ENCODE measurements at regions of chr6 and their contacts with region 1.

Region 1: DNA sequence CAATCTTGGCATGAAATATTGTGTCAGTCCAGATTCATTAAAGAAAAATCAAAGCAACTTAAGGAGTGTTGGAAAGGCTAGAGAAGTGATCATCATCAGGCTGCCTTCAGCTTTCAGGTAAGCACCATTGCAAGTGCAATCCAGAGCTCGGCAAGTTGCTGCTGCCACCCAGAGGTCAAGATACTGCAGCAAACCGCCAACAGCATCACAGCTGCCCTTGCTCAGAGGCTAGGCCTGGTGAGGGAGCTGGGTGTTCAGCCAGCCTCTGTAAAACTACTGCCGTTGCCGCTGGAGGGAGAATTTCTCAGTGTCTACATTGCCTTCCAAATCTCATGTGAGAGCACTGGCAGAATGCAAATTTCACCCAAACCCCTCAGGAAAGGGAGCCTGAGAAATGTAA is 5.8 kb upstream of the SYNE1 start:
- DNase-seq: peak; percentile 51 to 73
- ATAC-seq: peak; percentile 87 to 96 (median 92)
- H3K4me3 ChIP-seq: no peak overlapping the region
- H3K27ac ChIP-seq: no peak overlapping the region
- H3K4me1 ChIP-seq: peaks cover 0 to 2% (median 0%) of the 10 kb centered on the region in 9 donors
- H3K27me3 ChIP-seq: peaks cover 0 to 3% (median 0%) of the 10 kb centered on the region in 7 donors
- CTCF ChIP-seq: peak; percentile 36 to 84 (median 66)

Region 2: DNA sequence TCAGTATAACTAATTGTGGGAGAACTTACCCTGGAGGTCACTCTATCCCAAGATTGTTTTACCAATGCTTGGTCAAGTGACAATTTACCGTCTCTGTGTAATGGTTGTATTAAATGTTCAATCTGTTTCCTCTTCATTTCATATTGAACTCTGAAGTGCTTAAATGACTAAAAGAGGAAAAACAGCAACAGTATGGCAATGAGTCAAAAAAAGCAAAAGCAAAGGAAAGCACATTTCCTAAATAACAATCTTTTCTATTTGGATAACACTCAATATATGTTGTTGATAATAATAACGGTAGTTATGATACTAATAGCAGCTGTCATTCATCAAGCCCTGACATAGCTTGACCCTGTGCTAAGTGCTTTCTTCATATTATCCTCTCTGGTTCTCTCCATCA is 158.2 kb before region 1 on chr6:
- intact Hi-C with region 1: loop called in 4 of 10 experiments (anchors 10 kb)
- DNase-seq: no peak
- ATAC-seq: no peak
- H3K4me3 ChIP-seq: no peak overlapping the region
- H3K27ac ChIP-seq: no peak overlapping the region
- H3K4me1 ChIP-seq: no peaks in the 10 kb centered on the region
- H3K27me3 ChIP-seq: no peaks in the 10 kb centered on the region
- CTCF ChIP-seq: no peak

Region 3: GRCh38 chr6:152701081-152701862 is 58.3 kb after region 1 on chr6:
- intact Hi-C with region 1: loop called in 2 of 10 experiments (anchors 5 kb)
- DNase-seq: no peak
- ATAC-seq: peak in 4 of 8 donors; percentile 25 to 59 (median 43)
- H3K4me3 ChIP-seq: peak overlapping the region in 9 of 10 donors; percentile 7 to 58 (median 47)
- H3K27ac ChIP-seq: peak overlapping the region in 6 of 10 donors; percentile 10 to 83 (median 72)
- H3K4me1 ChIP-seq: peaks cover 0 to 41% (median 0%) of the 10 kb centered on the region in 9 donors
- H3K27me3 ChIP-seq: peaks cover 0 to 17% (median 0%) of the 10 kb centered on the region in 7 donors
- CTCF ChIP-seq: peak in 5 of 9 donors; percentile 8 to 48 (median 24)